ENCODE measurements at regions of chr21 and their contacts with region 1.

Region 1: DNA sequence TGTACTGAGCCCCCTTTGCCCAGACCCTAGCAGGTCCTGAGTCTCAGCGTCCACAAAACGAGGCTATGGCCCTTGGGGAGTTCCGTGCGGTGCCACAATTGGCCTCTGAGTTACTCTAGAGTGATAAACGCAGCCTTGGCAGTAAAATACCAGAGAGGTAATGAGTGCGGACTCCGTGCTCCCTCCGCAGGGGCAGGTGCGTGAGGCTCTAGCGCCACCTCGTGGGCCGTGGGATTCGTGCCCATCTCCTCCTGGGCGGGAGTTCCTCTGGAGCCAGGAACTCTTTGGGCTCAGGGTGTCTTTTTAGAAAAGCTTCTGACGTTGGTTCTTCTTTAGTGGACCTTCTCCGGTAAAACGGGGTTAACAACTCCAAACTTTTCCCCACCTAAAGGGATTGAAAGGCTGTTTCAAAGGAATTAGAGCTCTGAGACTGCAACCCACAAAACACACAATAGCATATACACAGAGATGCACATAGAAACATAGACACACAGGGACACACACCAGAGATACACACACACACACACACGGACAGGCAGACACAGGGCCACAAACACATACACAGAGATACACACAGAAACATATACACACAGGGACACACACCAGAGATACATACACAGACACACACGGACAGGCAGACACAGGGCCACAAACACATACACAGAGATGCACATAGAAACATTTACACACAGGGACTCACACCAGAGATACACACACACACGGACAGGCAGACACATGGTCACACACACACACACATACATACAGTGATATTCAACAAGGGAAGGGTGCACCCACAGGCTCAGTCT is 99.4 kb downstream of the KCNJ15 start:
- DNase-seq: peak; percentile 85
- CTCF ChIP-seq: peak; percentile 88

Region 2: GRCh38 chr21:37700641-37701202 is 655.5 kb before region 1 on chr21:
- CTCF ChIA-PET with region 1: interaction called, 11 read pairs
- POLR2A ChIA-PET with region 1: no interaction called
- DNase-seq: peak; percentile 80
- CTCF ChIP-seq: peak; percentile 65

Region 3: GRCh38 chr21:37717534-37717933 is 638.7 kb before region 1 on chr21:
- CTCF ChIA-PET with region 1: interaction called, 18 read pairs
- POLR2A ChIA-PET with region 1: no interaction called
- DNase-seq: no peak
- CTCF ChIP-seq: no peak

Region 4: DNA sequence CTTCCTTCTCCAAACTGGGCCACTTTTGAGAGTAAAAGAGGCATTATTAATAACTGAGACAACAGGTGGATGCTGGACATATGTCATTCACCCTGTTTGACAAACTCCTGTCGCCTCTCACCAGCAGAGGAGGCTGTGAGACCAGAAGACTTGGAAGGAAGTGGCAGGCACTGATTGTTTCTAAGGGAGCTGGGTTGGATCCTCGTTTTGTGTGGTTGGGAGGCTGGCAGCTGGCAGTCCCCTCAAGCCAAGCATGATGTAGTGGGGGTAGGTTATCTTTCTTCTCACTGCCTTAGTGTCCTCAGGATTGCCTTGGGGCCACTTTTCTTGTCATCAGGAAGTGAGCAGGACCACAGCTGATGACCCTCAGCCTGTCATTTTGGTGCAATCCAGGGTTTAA is 185.9 kb before region 1 on chr21:
- CTCF ChIA-PET with region 1: interaction called, 96 read pairs
- POLR2A ChIA-PET with region 1: no interaction called
- DNase-seq: peak; percentile 20
- CTCF ChIP-seq: peak; percentile 29

Region 5: DNA sequence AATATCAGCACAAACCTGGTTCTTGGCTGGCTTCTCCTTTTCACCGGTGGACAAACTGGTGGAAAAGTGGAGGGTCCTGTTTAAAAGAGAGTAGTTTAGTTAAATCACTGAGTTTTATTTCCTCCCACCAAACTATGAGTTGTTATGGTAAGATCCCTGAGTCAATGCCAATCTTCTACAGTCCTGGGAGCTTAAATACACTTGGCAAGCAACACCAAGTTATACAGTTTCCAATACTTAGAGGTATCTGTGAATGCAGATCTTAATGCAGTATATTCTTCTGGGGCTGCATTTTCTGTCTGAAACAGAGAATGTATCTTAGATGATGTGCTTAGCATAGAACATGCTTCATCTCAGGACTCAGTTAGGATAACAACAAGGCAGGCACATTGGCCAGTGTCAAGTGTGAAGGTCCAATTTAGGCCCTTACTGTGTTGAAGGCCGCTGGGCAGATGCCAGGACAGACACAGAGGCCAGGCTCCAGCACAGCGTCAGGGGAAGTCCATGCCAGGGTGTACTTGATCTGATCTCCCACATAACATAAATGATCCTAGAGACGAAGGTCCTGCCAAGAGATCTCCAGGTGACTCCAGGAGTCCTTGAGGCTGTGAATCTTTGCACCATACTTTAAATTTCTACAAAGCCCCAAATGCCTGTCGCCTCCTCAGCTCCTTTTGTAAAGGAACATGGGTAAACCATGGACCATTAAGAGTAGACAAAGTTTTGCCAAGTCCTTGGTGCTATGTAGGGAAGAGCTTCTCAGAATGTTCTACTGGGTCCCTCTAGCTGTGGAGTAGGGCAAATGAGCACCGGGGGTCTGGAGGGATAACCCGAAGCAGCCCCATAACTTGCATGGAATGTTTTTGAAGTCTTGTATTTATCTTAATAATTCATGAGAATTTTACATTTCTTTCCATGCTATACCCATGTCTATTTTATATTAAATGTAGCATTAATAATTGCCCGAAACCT is 22.6 kb before region 1 on chr21:
- CTCF ChIA-PET with region 1: interaction called, 11 read pairs
- POLR2A ChIA-PET with region 1: no interaction called
- DNase-seq: no peak
- CTCF ChIP-seq: no peak

Region 6: DNA sequence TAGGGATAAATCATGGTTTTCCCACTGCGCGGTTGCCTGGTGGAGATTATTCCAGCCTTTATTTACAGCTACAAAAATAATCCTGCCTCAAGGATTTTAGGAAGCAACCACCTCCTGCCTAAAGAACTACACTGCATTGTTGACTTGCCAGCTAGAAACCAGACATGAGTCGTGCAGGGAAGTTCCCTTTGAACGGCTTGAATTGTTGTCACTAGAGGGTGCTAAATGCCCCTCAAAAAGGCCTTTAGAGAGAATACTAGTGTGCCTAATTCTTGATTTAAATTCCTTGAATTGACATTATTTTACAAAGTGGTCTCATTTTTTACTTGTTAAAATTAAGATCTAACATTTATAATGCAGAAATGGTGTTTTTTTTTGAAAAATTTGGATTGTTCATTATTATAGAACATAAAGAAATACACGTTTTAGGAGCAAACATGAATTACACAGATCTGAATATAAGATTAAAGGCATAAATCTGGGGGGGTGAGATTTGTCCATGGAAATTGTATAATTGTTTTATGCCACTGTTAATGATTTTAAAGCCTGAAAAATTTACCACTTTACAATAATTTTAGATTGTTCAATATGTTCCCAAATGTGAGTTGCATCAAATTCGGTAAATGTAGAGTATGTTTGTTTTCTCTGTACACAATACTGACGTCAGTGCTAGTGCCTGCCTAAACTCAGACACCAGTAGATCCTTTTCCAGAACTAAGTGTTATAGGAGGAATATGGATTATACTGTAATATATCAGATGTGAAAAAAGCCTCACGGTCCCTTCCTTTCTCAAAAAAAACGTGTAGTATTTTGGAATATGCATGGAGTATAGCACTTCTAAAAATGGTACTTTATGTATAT is 149.7 kb after region 1 on chr21:
- CTCF ChIA-PET with region 1: no interaction called
- POLR2A ChIA-PET with region 1: no interaction called
- DNase-seq: peak; percentile 31
- CTCF ChIP-seq: peak; percentile 60

Measured in GM10248 (cell line).